ENCODE measurements at regions of chr6 and their contacts with region 1.

Region 1: GRCh38 chr6:134097114-134097707 is 44.8 kb upstream of the SLC2A12 start:
- DNase-seq: peak; percentile 74
- H3K4me3 ChIP-seq: no peak overlapping the region
- H3K27ac ChIP-seq: no peak overlapping the region
- H3K4me1 ChIP-seq: no peaks in the 10 kb centered on the region
- H3K27me3 ChIP-seq: no peaks in the 10 kb centered on the region
- CTCF ChIP-seq: peak; percentile 38

Region 2: GRCh38 chr6:133568970-133569889 is 528.0 kb before region 1 on chr6:
- intact Hi-C with region 1: loop called (anchors 10 kb)
- DNase-seq: no peak
- H3K4me3 ChIP-seq: no peak overlapping the region
- H3K27ac ChIP-seq: no peak overlapping the region
- H3K4me1 ChIP-seq: no peaks in the 10 kb centered on the region
- H3K27me3 ChIP-seq: no peaks in the 10 kb centered on the region
- CTCF ChIP-seq: peak; percentile 70

Region 3: GRCh38 chr6:133837801-133838349 is 259.3 kb before region 1 on chr6:
- intact Hi-C with region 1: loop called (anchors 5 kb)
- DNase-seq: peak; percentile 75
- H3K4me3 ChIP-seq: peak overlapping the region; percentile 38
- H3K27ac ChIP-seq: no peak overlapping the region
- H3K4me1 ChIP-seq: no peaks in the 10 kb centered on the region
- H3K27me3 ChIP-seq: no peaks in the 10 kb centered on the region
- CTCF ChIP-seq: peak; percentile 73

Region 4: DNA sequence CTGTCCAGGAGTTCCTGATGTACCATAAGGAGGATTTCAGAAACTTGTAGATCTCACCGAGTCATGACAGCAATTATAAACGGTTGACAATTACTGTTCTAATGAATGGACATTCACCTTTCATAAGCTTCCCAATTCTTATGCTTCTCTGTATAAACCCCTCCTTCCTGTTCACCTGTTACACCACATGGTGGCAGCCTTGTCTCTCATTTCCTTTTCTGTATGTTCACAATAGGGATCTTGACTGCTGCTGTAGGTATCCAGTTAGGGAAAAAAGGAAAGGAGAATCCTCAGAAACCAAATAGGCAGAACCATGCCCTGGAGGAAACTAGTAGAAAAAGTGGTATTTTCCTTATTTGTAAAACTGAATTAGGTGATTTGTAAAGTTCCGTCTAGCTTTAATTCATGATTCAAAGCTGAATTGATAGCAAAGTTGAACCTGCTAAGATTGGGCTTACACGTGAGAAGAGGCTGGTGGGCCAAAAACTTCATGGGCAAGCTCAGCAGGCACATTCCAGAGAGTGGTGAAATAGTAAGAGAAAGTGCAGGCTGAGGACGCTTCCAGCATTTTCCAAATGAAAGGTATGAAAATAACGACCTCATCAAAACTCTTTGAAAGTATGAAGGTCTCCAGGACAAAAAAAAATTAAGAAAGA is 173.1 kb before region 1 on chr6:
- intact Hi-C with region 1: loop called (anchors 1 kb)
- DNase-seq: peak; percentile 75
- H3K4me3 ChIP-seq: no peak overlapping the region
- H3K27ac ChIP-seq: no peak overlapping the region
- H3K4me1 ChIP-seq: no peaks in the 10 kb centered on the region
- H3K27me3 ChIP-seq: no peaks in the 10 kb centered on the region
- CTCF ChIP-seq: peak; percentile 85

Region 5: GRCh38 chr6:133966654-133967329 is 130.4 kb before region 1 on chr6:
- intact Hi-C with region 1: no loop called
- DNase-seq: no peak
- H3K4me3 ChIP-seq: no peak overlapping the region
- H3K27ac ChIP-seq: peak overlapping the region; percentile 10
- H3K4me1 ChIP-seq: peaks cover 3% of the 10 kb centered on the region
- H3K27me3 ChIP-seq: no peaks in the 10 kb centered on the region
- CTCF ChIP-seq: no peak

Region 6: GRCh38 chr6:133977983-133978895 is 119.0 kb before region 1 on chr6:
- intact Hi-C with region 1: no loop called
- DNase-seq: no peak
- H3K4me3 ChIP-seq: no peak overlapping the region
- H3K27ac ChIP-seq: no peak overlapping the region
- H3K4me1 ChIP-seq: no peaks in the 10 kb centered on the region
- H3K27me3 ChIP-seq: no peaks in the 10 kb centered on the region
- CTCF ChIP-seq: no peak

Region 7: DNA sequence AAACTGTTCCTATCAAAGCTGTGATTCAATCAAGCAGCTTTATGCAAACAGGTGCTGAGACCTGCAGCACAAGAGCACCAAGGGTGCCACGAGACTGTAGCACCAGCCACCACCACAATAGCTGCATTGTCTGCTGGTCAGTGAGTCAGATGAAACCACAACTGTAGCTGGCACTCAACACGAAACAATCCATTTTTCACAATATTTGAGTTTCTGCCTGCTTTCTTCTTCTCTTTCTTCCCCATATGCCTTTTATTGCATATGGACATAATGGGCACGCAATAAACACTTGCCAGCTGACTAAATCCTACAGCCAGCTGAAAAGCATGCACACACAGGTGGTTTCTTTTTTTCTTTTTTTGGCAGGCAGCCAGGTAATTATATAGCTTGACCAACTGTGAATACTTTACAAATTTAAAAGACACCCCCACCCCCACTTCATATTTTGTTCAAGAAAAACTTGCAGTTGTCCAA is 61.4 kb before region 1 on chr6:
- intact Hi-C with region 1: no loop called
- DNase-seq: peak; percentile 59
- H3K4me3 ChIP-seq: no peak overlapping the region
- H3K27ac ChIP-seq: peak overlapping the region; percentile 75
- H3K4me1 ChIP-seq: no peaks in the 10 kb centered on the region
- H3K27me3 ChIP-seq: no peaks in the 10 kb centered on the region
- CTCF ChIP-seq: no peak

Region 8: GRCh38 chr6:134123666-134124208 is 26.5 kb after region 1 on chr6:
- intact Hi-C with region 1: no loop called
- DNase-seq: no peak
- H3K4me3 ChIP-seq: no peak overlapping the region
- H3K27ac ChIP-seq: no peak overlapping the region
- H3K4me1 ChIP-seq: no peaks in the 10 kb centered on the region
- H3K27me3 ChIP-seq: no peaks in the 10 kb centered on the region
- CTCF ChIP-seq: peak; percentile 72

Measured in colonic mucosa (tissue), 4 donors.